ENCODE measurements at regions of chr20 and their contacts with region 1.

Region 1: GRCh38 chr20:35883778-35884540 is 70.3 kb downstream of the SCAND1 start:
- ATAC-seq: peak; percentile 75 to 91 (median 90)
- H3K4me3 ChIP-seq: no peak overlapping the region
- H3K27ac ChIP-seq: no peak overlapping the region
- H3K4me1 ChIP-seq: no peaks in the 10 kb centered on the region

Region 2: DNA sequence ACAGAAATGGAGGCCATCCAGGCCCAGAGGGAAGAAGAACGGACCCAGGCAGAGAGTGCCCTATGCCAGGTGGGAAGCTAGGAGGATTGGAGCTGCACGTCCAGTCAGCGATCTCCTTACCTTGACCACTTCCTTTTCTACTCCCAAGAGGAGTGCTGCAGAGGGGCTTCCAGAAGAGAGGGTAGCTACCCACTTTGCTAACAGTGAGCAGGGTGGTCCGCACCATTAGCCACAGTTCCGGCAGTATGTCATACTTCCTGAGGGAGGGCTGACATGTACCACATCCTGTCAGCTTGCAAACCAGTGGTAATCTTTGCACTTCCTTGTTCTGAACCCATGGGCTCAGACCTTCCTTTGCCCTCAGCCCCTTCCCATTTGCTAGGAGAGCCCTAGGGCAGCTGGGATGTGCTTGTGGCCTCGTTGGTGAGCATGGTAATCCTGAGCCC is 393.2 kb before region 1 on chr20:
- in situ Hi-C with region 1: loop called in 1 of 9 experiments (anchors 25 kb)
- ATAC-seq: no peak
- H3K4me3 ChIP-seq: no peak overlapping the region
- H3K27ac ChIP-seq: no peak overlapping the region
- H3K4me1 ChIP-seq: no peaks in the 10 kb centered on the region

Region 3: DNA sequence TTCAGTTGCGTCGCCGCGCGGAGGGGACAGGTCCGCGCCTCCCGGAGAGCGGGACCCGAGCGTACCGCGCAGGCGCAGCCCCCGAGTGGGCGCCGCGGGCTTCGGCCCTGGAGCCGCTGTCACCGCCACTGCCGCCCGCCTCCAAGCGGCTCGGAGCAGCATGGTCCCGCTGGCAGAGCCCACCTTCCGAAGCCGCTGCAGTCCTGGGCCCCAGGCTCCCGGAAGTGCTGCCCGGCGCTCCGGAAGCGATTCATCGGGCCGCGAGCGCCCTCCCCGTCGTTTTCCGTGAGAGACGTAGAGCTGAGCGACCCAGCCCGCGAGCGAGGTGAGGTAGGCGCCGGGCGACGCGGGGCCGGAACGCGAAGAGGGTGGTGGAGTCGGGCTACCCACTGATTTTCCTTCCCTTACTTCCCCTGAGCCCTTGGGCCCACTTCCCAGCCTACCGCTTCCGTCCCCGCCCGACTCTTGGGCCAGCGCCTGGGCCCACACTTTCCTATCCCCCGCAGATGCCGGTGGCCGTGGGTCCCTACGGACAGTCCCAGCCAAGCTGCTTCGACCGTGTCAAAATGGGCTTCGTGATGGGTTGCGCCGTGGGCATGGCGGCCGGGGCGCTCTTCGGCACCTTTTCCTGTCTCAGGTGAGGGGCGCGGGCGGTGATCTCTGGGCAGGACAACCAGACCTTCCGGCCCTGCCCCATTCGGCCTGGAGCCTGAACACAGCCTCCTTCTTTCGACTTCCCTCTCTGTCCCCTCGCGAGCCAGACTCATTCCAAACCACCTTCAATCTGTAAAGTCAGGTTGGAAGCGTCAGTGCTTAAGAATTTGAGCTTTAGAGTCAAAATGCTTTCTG is 184.6 kb before region 1 on chr20 and contains the starts of genes NFS1 and ROMO1:
- in situ Hi-C with region 1: loop called in 1 of 9 experiments (anchors 25 kb)
- ATAC-seq: peak; percentile 83 to 98 (median 96)
- H3K4me3 ChIP-seq: peak within 1 kb of the TSS; percentile 52 to 91 (median 59)
- H3K27ac ChIP-seq: peak within 1 kb of the TSS; percentile 81 to 96
- H3K4me1 ChIP-seq: peaks cover 11 to 12% of the 10 kb centered on the region in 2 donors
- total RNA-seq, gene NFS1: 11.1 to 37.2 (median 17.7) TPM
- total RNA-seq, gene ROMO1: 178 to 374 (median 295) TPM

Region 4: DNA sequence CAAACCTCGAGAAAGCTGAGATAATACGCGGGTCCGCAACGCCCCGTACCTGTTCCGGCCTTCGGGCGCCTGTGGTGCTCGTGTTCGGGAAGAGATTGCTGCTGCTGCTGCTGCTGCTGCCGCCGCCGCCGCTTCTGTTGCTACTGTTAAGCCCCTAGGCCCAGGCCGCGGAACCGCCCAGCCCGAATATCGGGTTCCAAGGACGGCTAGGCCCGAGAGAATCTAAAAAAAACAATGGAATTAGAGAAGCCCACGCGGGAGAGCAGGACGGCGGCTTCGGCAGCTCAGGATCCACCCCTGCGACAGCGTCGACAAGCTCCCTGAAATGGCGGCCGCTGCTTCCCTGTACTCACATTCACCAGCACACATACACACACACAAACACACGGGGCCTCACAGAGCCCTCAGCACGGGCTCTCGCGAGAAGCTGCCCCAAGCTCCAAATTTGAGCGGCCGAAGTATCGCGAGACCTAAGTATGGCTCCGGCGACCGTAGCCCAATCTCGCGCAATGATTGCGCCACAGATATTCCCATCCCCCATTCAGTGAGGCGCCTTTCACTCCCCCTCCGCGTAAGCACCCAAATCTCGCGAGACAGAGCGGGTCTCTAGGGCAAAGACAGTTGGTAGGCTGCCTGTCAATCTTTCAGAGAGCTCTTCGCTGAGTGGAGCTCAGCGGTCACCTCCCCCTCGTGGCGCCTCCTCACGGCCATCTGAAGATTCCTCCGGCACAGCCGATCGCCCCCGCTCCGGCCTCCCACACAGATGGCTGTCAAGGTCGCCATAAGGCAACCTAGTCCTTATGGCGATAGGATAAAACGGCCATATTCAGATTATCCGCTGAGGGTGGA is 141.8 kb before region 1 on chr20 and contains the start of gene RBM39:
- in situ Hi-C with region 1: loop called in 1 of 9 experiments (anchors 25 kb)
- ATAC-seq: peak; percentile 91 to 96 (median 94)
- H3K4me3 ChIP-seq: peak within 1 kb of the TSS; percentile 72 to 90 (median 79)
- H3K27ac ChIP-seq: peak within 1 kb of the TSS; percentile 99
- H3K4me1 ChIP-seq: peaks cover 11 to 24% of the 10 kb centered on the region in 2 donors
- total RNA-seq, gene RBM39: 254 to 567 (median 319) TPM

Region 5: GRCh38 chr20:36975099-36975818 is 1091.3 kb after region 1 on chr20:
- in situ Hi-C with region 1: no loop called
- ATAC-seq: peak in 1 of 8 experiments; percentile 56
- H3K4me3 ChIP-seq: no peak overlapping the region
- H3K27ac ChIP-seq: no peak overlapping the region
- H3K4me1 ChIP-seq: no peaks in the 10 kb centered on the region